ENCODE measurements at regions of chr7 and their contacts with region 1.

Region 1: DNA sequence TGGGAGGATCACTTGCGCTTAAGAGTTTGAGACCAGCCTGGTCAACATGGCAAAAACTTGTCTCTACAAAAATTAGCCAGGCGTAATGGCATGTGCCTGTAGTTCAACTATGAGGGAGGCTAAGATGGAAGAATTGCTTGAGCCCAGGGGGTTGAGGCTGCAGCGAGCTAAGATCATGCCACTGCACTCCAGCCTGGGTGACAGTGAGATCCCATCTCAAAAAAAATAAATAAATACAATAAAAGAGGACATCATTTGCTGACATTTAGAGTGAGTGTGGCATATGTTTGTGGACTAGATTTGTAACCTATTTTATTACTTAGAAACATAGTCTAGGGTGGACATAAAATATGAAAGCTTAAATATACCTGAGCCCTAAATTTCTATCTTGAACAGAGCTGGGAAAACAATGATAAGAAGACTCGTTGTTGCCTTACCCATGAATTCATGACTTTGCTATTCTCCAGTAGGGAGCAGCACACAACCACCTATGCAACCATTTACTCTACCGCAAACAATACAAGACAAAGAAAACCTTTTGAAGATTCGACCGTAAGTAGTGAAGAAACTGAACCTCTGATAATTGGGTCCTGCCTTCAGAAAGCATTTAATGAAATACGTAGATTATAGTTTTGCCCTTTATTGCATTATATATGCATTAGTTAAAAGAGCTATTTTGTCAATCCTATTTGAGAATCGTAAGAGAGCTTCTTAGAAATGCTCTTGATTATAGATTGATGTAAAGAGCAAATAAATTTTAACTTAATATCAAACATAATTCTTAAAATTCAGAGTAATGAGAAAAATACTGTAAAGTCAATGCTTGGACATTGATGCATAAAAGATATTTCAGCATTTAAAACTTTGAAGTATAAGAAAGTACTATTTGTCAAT is 83.5 kb downstream of the GNAT3 start:
- DNase-seq: no peak
- H3K4me3 ChIP-seq: no peak overlapping the region
- H3K27me3 ChIP-seq: no peaks in the 10 kb centered on the region
- CTCF ChIP-seq: peak; percentile 62

Region 2: GRCh38 chr7:80439894-80440821 is 11.8 kb after region 1 on chr7:
- CTCF ChIA-PET with region 1: interaction called, 16 read pairs
- POLR2A ChIA-PET with region 1: no interaction called
- DNase-seq: peak; percentile 81
- H3K4me3 ChIP-seq: no peak overlapping the region
- H3K27me3 ChIP-seq: no peaks in the 10 kb centered on the region
- CTCF ChIP-seq: no peak

Region 3: GRCh38 chr7:80445351-80445750 is 16.9 kb after region 1 on chr7:
- CTCF ChIA-PET with region 1: interaction called, 14 read pairs
- POLR2A ChIA-PET with region 1: no interaction called
- DNase-seq: peak; percentile 51
- H3K4me3 ChIP-seq: no peak overlapping the region
- H3K27me3 ChIP-seq: no peaks in the 10 kb centered on the region
- CTCF ChIP-seq: no peak

Region 4: GRCh38 chr7:80450621-80451308 is 22.4 kb after region 1 on chr7:
- CTCF ChIA-PET with region 1: interaction called, 14 read pairs
- POLR2A ChIA-PET with region 1: no interaction called
- DNase-seq: no peak
- H3K4me3 ChIP-seq: no peak overlapping the region
- H3K27me3 ChIP-seq: no peaks in the 10 kb centered on the region
- CTCF ChIP-seq: no peak

Region 5: DNA sequence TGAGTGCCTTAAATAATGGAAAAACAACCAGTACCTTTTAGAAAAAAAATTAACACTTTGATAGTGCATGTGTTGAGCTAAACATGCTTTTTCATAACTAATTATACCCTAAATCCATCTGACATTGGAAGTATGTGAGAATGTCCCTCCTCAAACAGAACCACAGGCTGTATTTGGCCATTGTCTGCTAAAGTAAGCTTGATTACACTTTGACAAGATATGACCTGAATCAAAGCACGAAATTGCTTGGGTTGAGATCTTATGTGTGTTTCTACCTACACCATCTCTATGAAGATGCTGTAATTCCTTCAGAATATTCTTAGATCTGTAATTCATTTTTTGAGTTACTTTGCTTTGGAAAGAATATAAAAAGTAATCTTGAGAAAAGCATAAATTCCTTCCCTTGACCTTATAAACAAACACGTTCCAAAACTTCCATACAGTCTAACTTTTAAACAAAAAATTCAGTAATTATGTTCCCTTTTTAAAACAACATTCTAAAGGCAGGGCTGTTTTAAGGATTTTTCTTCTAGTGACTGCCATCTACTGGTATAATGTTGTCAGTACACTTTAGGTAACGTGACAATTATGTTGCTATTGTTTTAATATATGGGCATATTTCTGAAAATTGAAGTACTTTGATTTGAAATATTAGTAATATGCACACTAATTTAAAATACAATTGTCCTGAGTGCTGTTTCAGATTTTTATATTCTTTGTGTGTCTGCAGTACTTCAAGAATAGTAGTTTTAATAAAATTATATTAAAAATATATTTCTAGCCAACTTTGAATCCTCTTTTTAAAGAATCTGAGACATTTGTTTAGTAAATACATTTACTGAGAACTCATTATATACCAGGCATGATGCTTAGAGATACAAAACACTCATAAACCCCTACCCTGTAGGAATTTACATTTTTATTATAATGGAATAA is 231.0 kb after region 1 on chr7:
- CTCF ChIA-PET with region 1: interaction called, 41 read pairs
- POLR2A ChIA-PET with region 1: no interaction called
- DNase-seq: peak; percentile 19
- H3K4me3 ChIP-seq: no peak overlapping the region
- H3K27me3 ChIP-seq: no peaks in the 10 kb centered on the region
- CTCF ChIP-seq: peak; percentile 49

Region 6: GRCh38 chr7:80681272-80681885 is 253.0 kb after region 1 on chr7:
- CTCF ChIA-PET with region 1: interaction called, 35 read pairs
- POLR2A ChIA-PET with region 1: no interaction called
- DNase-seq: no peak
- H3K4me3 ChIP-seq: no peak overlapping the region
- H3K27me3 ChIP-seq: no peaks in the 10 kb centered on the region
- CTCF ChIP-seq: peak; percentile 57

Region 7: GRCh38 chr7:81469869-81470723 is 1041.7 kb after region 1 on chr7:
- CTCF ChIA-PET with region 1: interaction called, 11 read pairs
- POLR2A ChIA-PET with region 1: no interaction called
- DNase-seq: no peak
- H3K4me3 ChIP-seq: no peak overlapping the region
- H3K27me3 ChIP-seq: no peaks in the 10 kb centered on the region
- CTCF ChIP-seq: peak; percentile 78

Measured in BJ (cell line).